Posterior vena cava (tissue), 2 donors: ENCODE measurements at regions of chr4 and their contacts with region 1.

Region 1: DNA sequence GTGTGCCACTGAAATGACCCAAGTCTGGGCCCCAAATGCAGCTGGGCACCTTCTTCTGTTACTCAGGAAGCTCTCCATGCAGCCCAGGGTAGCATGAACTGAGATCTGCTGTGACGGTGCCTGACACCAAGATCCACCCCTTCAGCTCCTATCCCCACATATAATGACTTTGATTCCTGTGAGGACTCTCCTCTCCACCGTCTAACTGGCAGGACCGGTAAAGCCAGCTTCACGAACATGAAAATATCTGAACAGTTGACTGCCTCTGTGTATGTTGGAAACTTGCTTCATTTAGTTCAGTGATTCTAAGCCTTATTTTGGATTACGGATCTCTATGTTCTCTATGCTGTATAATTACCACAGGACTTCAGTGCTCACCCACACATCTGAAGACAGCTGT is 115.5 kb upstream of the TMEM150C start:
- DNase-seq: no peak

Region 2: DNA sequence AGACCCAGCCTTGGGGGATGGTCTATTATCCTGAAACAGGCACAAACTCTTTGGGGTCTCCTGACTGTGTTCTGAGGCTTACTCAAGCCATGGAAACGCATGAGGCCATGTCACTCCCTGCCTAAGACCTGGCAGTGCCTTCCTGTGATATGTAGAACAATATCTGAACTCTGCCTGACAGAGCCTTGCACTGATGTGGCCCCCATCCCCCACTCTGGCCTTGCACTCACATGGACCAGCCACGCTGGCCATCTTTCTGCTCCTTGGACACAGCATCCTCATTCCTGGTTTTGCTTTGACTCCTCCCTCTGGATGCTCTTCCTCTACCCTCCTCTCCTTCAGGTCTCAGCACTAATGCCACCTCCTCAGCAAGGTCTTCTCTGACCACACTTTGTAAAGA is 21.1 kb after region 1 on chr4:
- intact Hi-C with region 1: loop called in 1 of 2 experiments (anchors 1 kb)
- DNase-seq: no peak